Heart right ventricle (tissue), 16 donors: ENCODE measurements at regions of chr15 and their contacts with region 1.

Region 1: DNA sequence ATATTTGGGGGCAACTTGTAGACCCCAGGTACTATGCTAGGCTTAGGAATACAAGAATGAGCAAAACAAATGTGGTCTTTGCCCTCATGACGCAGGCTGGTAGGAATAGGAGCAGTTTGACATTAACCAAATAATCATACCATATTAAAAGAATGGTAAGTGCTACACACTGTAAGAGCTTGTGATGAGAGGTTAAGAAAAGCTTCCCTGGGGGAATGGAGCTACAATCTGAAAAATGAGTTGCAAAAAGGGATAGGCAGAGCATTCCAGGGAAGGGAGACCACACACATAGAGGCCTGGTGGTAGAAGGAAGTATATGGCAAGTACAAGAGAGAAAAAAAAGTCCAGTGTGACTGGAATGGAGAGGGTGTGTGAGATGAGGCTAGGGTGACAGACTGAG is 37.3 kb downstream of the TMOD3 start:
- DNase-seq: no peak
- ATAC-seq: no peak
- H3K4me3 ChIP-seq: no peak overlapping the region
- H3K27ac ChIP-seq: no peak overlapping the region
- H3K4me1 ChIP-seq: peaks cover 0 to 19% (median 4%) of the 10 kb centered on the region in 9 donors
- H3K27me3 ChIP-seq: no peaks in the 10 kb centered on the region
- CTCF ChIP-seq: no peak

Region 2: GRCh38 chr15:51801391-51801835 is 65.3 kb before region 1 on chr15:
- intact Hi-C with region 1: no loop called
- DNase-seq: peak; percentile 54 to 64
- ATAC-seq: peak in 7 of 8 donors; percentile 72 to 84 (median 81)
- H3K4me3 ChIP-seq: no peak overlapping the region
- H3K27ac ChIP-seq: no peak overlapping the region
- H3K4me1 ChIP-seq: peaks cover 0 to 4% (median 0%) of the 10 kb centered on the region in 9 donors
- H3K27me3 ChIP-seq: no peaks in the 10 kb centered on the region
- CTCF ChIP-seq: peak; percentile 44 to 75 (median 59)

Region 3: GRCh38 chr15:51853998-51854397 is 12.8 kb before region 1 on chr15:
- intact Hi-C with region 1: loop called in 1 of 10 experiments (anchors 2 kb)
- DNase-seq: no peak
- ATAC-seq: no peak
- H3K4me3 ChIP-seq: no peak overlapping the region
- H3K27ac ChIP-seq: no peak overlapping the region
- H3K4me1 ChIP-seq: peaks cover 0 to 76% (median 23%) of the 10 kb centered on the region in 9 donors
- H3K27me3 ChIP-seq: no peaks in the 10 kb centered on the region
- CTCF ChIP-seq: no peak